ENCODE measurements at regions of chr19 and their contacts with region 1.

Region 1: DNA sequence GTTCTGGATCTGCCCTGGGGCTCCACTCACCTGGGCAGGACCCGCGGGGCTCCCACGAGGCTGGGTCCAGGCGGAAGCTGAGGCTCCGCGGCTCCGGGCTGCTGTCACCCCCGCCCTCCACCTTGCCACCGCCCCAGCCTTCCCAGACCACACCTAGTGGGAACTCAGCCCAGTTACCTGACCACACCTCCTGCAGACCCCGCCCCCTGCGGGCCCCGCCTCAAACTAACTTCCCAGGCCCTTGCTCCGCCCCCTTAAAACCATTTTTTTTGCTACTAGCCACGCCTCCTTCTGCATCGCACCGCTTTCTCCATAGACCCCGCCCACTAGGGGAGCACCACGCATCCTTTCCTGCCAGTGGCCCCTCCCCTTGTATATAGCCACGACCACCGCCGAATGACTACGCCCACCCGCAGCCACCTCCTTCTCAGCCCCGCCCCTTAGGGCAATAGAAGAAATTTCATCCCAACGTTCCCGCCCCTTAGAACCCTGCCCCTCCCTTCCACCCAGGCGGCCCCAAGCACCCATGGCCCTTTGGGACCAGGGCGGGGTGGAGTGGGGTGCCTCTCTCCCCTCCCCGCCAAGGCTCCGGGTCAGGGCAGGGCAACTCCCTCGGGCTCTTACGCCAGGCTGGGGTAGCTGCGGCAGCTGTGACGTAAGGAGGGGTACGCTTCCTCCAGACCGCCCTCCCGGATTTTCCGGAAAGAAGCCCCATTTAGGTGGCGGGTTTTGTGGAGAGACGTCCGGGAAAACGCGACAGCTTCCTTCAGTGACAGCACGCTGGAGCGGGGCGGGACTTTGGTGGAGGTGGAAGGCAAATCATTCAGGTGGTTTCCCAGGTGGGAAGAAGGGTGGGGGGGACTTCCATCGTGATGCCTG is at the start of gene SH2D3A:
- DNase-seq: peak; percentile 97
- ATAC-seq: peak; percentile 78
- H3K4me3 Mint-ChIP-seq: peak within 1 kb of the TSS; percentile 83
- H3K27ac Mint-ChIP-seq: peak within 1 kb of the TSS; percentile 94
- H3K4me1 Mint-ChIP-seq: peaks cover 42% of the 10 kb centered on the region
- H3K27me3 Mint-ChIP-seq: no peaks in the 10 kb centered on the region
- total RNA-seq, gene SH2D3A: 20.7 to 23.2 TPM

Region 2: GRCh38 chr19:6516659-6517291 is 250.8 kb before region 1 on chr19:
- CTCF ChIA-PET with region 1: interaction called, 9 read pairs
- POLR2A ChIA-PET with region 1: interaction called, 5 read pairs
- intact Hi-C with region 1: loop called in 1 of 2 experiments (anchors 1 kb)
- DNase-seq: peak; percentile 97
- ATAC-seq: peak; percentile 86
- H3K4me3 Mint-ChIP-seq: peak overlapping the region; percentile 79
- H3K27ac Mint-ChIP-seq: peak overlapping the region; percentile 92
- H3K4me1 Mint-ChIP-seq: peaks cover 34% of the 10 kb centered on the region
- H3K27me3 Mint-ChIP-seq: peaks cover 2% of the 10 kb centered on the region

Region 3: DNA sequence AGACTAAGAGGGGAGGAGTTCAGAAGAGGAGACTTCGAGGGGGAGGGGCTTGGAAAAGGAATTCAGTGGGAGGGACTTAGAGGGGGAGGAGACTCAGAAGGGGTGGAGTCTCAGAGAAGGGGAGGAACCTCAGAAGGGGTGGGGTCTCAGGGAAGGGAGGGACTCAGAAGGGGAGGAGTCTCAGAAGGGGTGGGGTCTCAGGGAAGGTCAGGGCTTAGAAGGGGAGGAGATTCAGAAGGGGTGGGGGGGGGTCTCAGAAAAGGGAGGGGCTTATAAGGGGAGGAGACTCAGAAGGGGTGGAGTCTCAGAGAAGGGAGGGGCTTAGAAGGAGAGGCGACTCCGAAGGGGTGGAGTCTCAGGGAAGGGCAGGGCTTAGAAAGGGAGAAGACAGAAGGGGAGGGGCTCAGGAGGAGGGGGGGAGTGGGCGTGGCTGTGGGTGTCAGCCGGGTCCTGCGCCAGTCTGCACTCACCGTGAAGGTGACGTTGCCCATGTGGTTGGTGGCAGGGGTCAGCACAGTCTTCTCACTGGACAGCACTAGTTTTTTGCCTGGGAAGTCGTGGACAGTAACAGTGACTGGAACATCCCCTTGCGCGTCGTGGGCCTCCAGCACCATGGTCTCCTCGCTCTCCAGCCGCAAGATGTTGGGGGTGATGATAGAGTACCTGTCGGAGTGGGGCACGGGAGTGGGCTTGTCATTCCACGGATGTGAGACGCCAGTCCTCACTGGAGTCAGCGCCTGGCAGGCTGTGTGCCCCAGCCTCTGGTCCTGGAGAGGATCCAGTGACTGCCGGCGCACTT is 48.7 kb before region 1 on chr19:
- CTCF ChIA-PET with region 1: no interaction called
- POLR2A ChIA-PET with region 1: no interaction called
- intact Hi-C with region 1: loop called in 1 of 2 experiments (anchors 1 kb)
- DNase-seq: peak; percentile 59
- ATAC-seq: peak; percentile 82
- H3K4me3 Mint-ChIP-seq: no peak overlapping the region
- H3K27ac Mint-ChIP-seq: no peak overlapping the region
- H3K4me1 Mint-ChIP-seq: peaks cover 15% of the 10 kb centered on the region
- H3K27me3 Mint-ChIP-seq: peaks cover 8% of the 10 kb centered on the region

Region 4: GRCh38 chr19:6801485-6802086 is 34.0 kb after region 1 on chr19:
- CTCF ChIA-PET with region 1: interaction called, 11 read pairs
- POLR2A ChIA-PET with region 1: interaction called, 18 read pairs
- intact Hi-C with region 1: loop called (anchors 1 to 2 kb)
- DNase-seq: peak; percentile 90
- ATAC-seq: peak; percentile 75
- H3K4me3 Mint-ChIP-seq: peak overlapping the region; percentile 82
- H3K27ac Mint-ChIP-seq: peak overlapping the region; percentile 98
- H3K4me1 Mint-ChIP-seq: peaks cover 72% of the 10 kb centered on the region
- H3K27me3 Mint-ChIP-seq: no peaks in the 10 kb centered on the region

Region 5: DNA sequence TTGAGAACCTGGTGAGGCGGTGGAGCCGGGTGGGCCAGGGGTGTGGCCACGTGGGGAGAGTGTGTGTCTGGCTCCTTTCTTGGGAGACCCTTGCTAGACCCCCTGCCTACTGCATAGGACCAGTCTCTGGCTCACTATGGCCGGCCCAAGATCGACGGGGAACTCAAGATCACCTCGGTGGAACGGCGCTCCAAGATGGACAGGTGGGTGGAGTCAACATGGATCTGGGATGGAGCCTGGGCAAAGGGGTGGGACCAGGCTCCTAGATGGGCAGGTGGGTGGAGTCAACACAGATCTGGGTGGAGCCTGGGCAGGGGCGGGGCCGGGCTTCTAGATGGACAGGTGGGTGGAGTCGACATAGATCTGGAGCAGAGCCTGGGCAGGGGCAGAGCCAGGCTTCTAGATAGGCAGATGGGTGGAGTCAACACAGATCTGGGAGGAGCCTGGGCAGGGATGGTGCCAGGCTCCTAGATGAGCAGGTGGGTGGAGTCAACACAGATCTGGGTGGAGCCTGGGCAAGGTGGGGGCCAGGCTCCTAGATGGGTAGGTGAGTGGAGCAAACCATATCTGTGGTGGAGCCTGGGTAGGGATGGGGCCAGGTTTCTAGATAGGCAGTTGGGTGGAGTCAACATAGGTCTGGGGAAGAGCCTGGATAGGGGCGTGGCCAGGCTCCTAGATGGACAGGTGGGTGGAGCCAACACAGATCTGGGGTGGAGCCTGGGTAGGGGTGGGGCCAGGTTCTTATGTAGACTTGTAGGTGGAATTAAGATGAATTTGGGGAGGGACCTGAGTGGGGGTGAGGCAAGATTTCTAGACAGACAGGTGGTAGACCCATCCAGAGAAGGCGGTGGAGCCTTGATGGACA is 61.3 kb after region 1 on chr19:
- CTCF ChIA-PET with region 1: interaction called, 3 read pairs
- POLR2A ChIA-PET with region 1: interaction called, 4 read pairs
- intact Hi-C with region 1: loop called in 1 of 2 experiments (anchors 1 kb)
- DNase-seq: peak; percentile 80
- ATAC-seq: peak; percentile 91
- H3K4me3 Mint-ChIP-seq: no peak overlapping the region
- H3K27ac Mint-ChIP-seq: peak overlapping the region; percentile 72
- H3K4me1 Mint-ChIP-seq: peaks cover 8% of the 10 kb centered on the region
- H3K27me3 Mint-ChIP-seq: no peaks in the 10 kb centered on the region

Region 6: GRCh38 chr19:7098701-7099596 is 331.4 kb after region 1 on chr19:
- CTCF ChIA-PET with region 1: no interaction called
- POLR2A ChIA-PET with region 1: no interaction called
- intact Hi-C with region 1: loop called in 1 of 2 experiments (anchors 1 kb)
- DNase-seq: peak; percentile 94
- ATAC-seq: peak; percentile 95
- H3K4me3 Mint-ChIP-seq: peak overlapping the region; percentile 90
- H3K27ac Mint-ChIP-seq: peak overlapping the region; percentile 92
- H3K4me1 Mint-ChIP-seq: peaks cover 27% of the 10 kb centered on the region
- H3K27me3 Mint-ChIP-seq: no peaks in the 10 kb centered on the region

Region 7: DNA sequence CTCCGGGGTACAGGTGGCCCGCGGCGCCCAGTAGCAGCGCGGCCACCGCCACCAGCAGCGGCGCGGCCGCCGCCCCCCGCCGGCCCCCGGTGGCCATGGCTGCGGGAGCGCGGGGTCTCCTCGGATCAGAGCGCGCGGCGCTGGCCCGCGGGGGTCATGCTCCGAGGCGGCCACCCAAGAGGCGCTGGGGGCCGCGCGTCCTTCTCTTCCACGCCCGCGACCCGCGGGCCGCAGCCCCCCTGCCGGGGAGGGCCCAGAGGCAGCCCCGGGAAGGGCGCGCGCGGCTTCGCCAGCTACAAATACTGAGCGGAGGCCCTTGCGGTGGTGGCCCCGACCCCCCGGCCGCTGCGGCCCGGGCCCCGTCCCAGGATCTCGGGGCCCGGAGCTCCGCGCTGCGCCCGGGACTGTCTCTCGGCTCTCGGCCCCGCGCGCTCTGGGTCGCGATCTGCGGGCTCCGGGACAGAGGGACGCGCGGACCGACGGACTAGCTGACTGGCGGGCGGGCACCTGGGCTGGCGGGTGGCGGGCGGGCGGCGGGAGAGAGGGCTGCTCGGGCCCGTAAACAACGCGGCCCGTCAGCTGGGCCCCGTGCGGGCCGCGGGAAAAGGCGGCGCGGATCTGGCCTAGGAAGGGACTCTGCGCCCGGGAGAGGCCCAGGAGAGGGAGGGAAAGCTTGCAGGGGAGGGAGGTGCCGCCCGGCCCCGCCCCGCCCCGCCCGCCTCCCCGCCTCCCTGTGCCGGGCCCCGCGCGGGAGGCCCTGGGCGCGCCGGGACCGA is 526.4 kb after region 1 on chr19 and contains the start of gene INSR:
- CTCF ChIA-PET with region 1: no interaction called
- POLR2A ChIA-PET with region 1: no interaction called
- intact Hi-C with region 1: no loop called
- DNase-seq: peak; percentile 85
- ATAC-seq: peak; percentile 92
- H3K4me3 Mint-ChIP-seq: peak within 1 kb of the TSS; percentile 72
- H3K27ac Mint-ChIP-seq: no peak within 1 kb of the TSS
- H3K4me1 Mint-ChIP-seq: peaks cover 8% of the 10 kb centered on the region
- H3K27me3 Mint-ChIP-seq: peaks cover 27% of the 10 kb centered on the region
- total RNA-seq, gene INSR: 3.5 to 4.2 TPM

Measured in activated CD4-positive, alpha-beta T cell treated with anti-CD3 and anti-CD28 coated beads for 36 hours (primary cell).